K562 (cell line): ENCODE measurements at regions of chr4 and their contacts with region 1.

Region 1: DNA sequence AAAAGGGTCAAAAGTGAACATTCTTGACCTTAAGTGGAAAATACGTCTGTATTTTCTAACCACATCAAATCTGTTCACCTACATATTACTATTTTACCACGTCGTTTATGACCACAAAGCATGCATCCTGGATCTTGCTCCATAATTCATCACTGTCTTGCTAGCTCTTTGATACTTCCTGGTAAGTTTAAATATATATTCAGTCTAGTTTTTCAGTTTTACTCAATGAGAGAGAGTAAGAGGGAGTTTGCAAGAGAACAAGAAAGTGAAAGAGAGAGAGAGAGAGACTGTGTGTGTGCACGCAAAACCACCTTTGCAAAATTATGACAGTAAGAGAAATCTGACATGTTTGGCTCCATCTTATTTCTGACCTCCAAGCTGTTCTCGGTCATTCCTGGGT is 173.7 kb upstream of the GALNTL6 start:
- DNase-seq: no peak
- ATAC-seq: no peak
- H3K4me3 ChIP-seq: no peak overlapping the region
- H3K27ac ChIP-seq: no peak overlapping the region
- H3K4me1 ChIP-seq: no peaks in the 10 kb centered on the region; a peak in 1 of 5 replicates
- H3K27me3 ChIP-seq: no peaks in the 10 kb centered on the region
- CTCF ChIP-seq: no peak
- EP300 ChIP-seq: no peak
- POLR2A ChIP-seq: no peak
- RAD21 ChIP-seq: no peak

Region 2: GRCh38 chr4:173061160-173061559 is 1421.6 kb after region 1 on chr4:
- CTCF ChIA-PET with region 1: no interaction called
- POLR2A ChIA-PET with region 1: no interaction called
- in situ Hi-C with region 1: loop called (anchors 10 kb)
- intact Hi-C with region 1: no loop called
- DNase-seq: no peak
- ATAC-seq: no peak
- H3K4me3 ChIP-seq: no peak overlapping the region
- H3K27ac ChIP-seq: no peak overlapping the region
- H3K4me1 ChIP-seq: peaks cover 0 to 6% of the 10 kb centered on the region in 2 experiments; a peak in 2 of 5 replicates
- H3K27me3 ChIP-seq: no peaks in the 10 kb centered on the region
- CTCF ChIP-seq: no peak
- EP300 ChIP-seq: no peak
- POLR2A ChIP-seq: no peak
- RAD21 ChIP-seq: no peak